ENCODE measurements at regions of chr14 and their contacts with region 1.

Region 1: GRCh38 chr14:79986251-79986650 is 225.1 kb downstream of the DIO2 start:
- DNase-seq: no peak
- H3K4me3 ChIP-seq: no peak overlapping the region
- H3K27ac ChIP-seq: no peak overlapping the region
- H3K4me1 ChIP-seq: no peaks in the 10 kb centered on the region
- H3K27me3 ChIP-seq: no peaks in the 10 kb centered on the region
- CTCF ChIP-seq: no peak
- EP300 ChIP-seq: no peak
- POLR2A ChIP-seq: no peak

Region 2: GRCh38 chr14:78798757-78799156 is 1187.5 kb before region 1 on chr14:
- intact Hi-C with region 1: loop called in 1 of 4 experiments (anchors 5 kb)
- DNase-seq: no peak
- H3K4me3 ChIP-seq: no peak overlapping the region
- H3K27ac ChIP-seq: no peak overlapping the region
- H3K4me1 ChIP-seq: no peaks in the 10 kb centered on the region
- H3K27me3 ChIP-seq: no peaks in the 10 kb centered on the region
- CTCF ChIP-seq: no peak
- EP300 ChIP-seq: no peak
- POLR2A ChIP-seq: no peak

Region 3: GRCh38 chr14:80055667-80056496 is 69.6 kb after region 1 on chr14:
- intact Hi-C with region 1: no loop called
- DNase-seq: peak in 2 of 5 donors; percentile 20 to 31
- H3K4me3 ChIP-seq: no peak overlapping the region
- H3K27ac ChIP-seq: no peak overlapping the region
- H3K4me1 ChIP-seq: no peaks in the 10 kb centered on the region
- H3K27me3 ChIP-seq: no peaks in the 10 kb centered on the region
- CTCF ChIP-seq: peak in 1 of 3 donors; percentile 10
- EP300 ChIP-seq: no peak
- POLR2A ChIP-seq: no peak